ENCODE measurements at regions of chr10 and their contacts with region 1.

Region 1: DNA sequence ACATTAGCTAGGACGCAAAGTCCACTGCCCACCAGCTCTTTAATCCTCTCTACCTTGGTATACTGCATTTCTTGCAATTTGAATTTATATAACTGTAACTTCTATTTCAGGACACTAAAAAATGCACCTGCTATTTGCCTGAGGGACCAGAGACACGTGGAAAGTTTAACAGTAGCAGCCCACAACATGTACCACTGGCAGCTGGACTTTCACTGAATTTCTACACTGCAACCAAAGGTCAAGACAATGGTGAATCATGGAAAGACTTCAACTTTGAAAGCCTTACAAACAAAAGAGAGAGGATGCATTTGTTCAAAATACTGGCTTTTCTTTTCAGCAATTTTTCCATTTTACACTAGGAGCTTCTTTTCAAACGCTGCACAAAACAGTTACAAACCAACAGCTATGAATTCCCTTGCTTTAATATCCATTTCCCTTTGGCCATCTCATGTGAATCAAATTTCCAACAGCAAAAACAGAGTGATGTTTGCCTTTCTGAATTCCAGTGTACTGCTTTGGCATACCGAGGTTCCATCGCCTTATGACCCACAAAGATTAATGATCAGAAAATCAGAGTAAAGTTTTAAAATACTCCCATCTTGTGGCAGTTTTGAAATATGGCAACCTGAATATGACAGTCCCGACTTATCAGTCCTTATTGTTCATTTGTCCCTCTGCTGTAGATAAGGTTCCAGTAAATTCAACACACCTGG is 29.9 kb upstream of the HNRNPH3 start:
- DNase-seq: no peak
- ATAC-seq: peak; percentile 55
- H3K4me3 Mint-ChIP-seq: no peak overlapping the region
- H3K27ac Mint-ChIP-seq: no peak overlapping the region
- H3K4me1 Mint-ChIP-seq: no peaks in the 10 kb centered on the region
- H3K27me3 Mint-ChIP-seq: no peaks in the 10 kb centered on the region

Region 2: DNA sequence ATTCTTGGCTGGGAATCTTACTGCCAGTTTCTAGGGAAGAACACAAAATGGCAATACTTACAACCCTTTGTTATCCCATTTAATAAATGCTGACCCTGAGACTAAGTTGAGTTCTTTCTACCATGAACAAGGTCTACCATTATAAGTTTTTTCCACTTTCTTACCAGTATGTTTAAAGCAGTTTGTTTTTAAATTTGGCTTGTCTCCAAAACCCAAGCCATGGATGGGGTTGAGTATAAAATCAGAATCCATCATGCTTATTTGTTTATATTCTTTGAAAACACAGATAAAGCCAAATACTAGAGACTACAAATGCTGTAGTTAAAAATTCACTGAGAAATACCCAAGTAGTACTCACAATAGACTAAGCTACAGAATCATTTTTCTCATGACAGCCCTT is 11.2 kb before region 1 on chr10:
- CTCF ChIA-PET with region 1: interaction called, 14 read pairs
- POLR2A ChIA-PET with region 1: no interaction called
- intact Hi-C with region 1: no loop called
- DNase-seq: no peak
- ATAC-seq: no peak
- H3K4me3 Mint-ChIP-seq: no peak overlapping the region
- H3K27ac Mint-ChIP-seq: no peak overlapping the region
- H3K4me1 Mint-ChIP-seq: no peaks in the 10 kb centered on the region
- H3K27me3 Mint-ChIP-seq: no peaks in the 10 kb centered on the region